ENCODE measurements at regions of chr1 and their contacts with region 1.

Region 1: DNA sequence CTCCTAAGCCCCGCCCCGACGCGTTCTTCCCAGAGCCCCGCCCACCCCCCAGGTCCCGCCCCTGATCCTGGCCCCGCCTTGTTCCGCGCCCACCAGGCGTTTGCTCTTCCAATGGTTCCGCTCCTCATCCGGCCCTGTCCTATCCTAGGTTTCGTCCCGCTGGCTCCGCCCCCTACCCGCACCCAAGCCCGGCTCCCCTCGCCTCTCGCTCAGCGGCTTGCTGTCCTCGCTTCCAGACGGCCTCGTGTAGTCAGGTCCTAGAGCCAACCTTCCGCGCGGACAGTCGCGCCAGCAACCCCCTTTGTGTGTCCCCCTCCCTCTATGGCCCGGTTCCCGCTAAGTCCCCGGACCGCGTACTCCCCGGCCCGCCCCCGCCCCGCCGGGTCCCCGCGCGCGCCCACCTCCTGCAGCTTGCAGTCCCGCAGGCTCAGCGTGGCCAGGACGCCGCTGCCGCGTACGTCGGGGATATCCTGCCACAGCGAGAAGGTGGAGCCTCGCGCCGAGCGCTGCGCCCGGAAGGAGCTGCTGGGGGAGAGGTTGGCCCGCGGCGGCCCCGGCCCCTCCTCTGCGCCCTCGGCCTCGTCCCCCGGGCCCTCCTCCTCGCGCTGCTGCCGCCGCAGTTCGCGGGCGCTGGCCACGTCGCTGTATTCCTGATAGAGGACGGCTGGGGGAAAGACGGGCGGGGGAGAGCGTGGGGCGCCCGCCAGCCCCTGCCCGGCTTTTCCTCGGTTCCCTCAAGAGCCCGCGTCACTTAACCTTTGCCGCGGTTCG is 5.7 kb downstream of the ARHGEF19 start:
- DNase-seq: peak; percentile 96 to 97
- H3K4me3 ChIP-seq: peak overlapping the region; percentile 50 to 67 (median 58)
- H3K27ac ChIP-seq: peak overlapping the region; percentile 56; the same call in 1 of the 2 replicates
- H3K4me1 ChIP-seq: peaks cover 4 to 33% (median 20%) of the 10 kb centered on the region in 4 experiments
- H3K27me3 ChIP-seq: no peaks in the 10 kb centered on the region
- CTCF ChIP-seq: no peak
- EP300 ChIP-seq: no peak
- POLR2A ChIP-seq: peak; percentile 68 to 79; a peak in 2 of 3 replicates
- RAD21 ChIP-seq: no peak

Region 2: GRCh38 chr1:16092097-16092922 is 114.4 kb before region 1 on chr1:
- CTCF ChIA-PET with region 1: no interaction called
- POLR2A ChIA-PET with region 1: no interaction called
- DNase-seq: no peak
- H3K4me3 ChIP-seq: no peak overlapping the region
- H3K27ac ChIP-seq: no peak overlapping the region
- H3K4me1 ChIP-seq: peaks cover 0 to 12% (median 3%) of the 10 kb centered on the region in 4 experiments; a peak in 4 of 7 replicates
- H3K27me3 ChIP-seq: peaks cover 0 to 2% (median 0%) of the 10 kb centered on the region in 4 experiments; a peak in 1 of 7 replicates
- CTCF ChIP-seq: no peak
- EP300 ChIP-seq: no peak
- POLR2A ChIP-seq: no peak
- RAD21 ChIP-seq: no peak

Region 3: DNA sequence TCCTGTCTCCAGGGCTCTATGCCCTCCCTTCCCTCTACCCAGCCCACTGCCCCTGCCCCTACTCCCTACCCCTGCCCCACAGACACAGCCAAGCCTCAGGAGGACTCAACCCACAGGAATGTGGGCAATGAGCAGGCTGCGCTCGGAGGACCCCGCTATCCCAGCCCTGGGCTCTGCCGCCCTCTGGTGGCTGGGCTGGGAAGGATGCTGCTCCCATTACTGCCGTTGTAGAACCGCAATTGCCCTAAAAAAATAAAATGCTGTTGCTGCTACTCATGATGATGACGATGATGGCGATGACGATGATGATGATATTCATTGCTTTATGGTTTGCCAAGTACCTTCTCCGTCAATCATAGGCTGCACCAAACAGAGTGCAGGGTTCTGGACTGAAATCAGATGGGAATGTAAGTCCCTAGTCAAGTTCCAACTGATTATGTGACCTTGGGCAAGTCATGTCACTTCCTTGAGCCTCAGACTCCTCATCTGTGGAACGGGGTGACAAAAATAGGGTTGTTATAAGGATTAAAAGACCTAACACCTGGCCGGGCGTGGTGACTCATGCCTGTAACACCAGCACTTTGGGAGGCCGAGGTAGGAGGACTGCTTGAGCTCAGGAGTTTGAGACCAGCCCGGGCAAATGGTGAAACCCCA is 18.9 kb before region 1 on chr1:
- CTCF ChIA-PET with region 1: interaction called, 45 read pairs
- POLR2A ChIA-PET with region 1: interaction called, 7 read pairs
- DNase-seq: peak in 1 of 2 experiments; percentile 95
- H3K4me3 ChIP-seq: no peak overlapping the region
- H3K27ac ChIP-seq: no peak overlapping the region
- H3K4me1 ChIP-seq: no peaks in the 10 kb centered on the region
- H3K27me3 ChIP-seq: no peaks in the 10 kb centered on the region; a peak in 1 of 7 replicates
- CTCF ChIP-seq: peak; percentile 92 to 98 (median 95)
- EP300 ChIP-seq: no peak
- POLR2A ChIP-seq: no peak
- RAD21 ChIP-seq: peak; percentile 100

Region 4: GRCh38 chr1:16217061-16217785 is 10.5 kb after region 1 on chr1:
- CTCF ChIA-PET with region 1: interaction called, 13 read pairs
- POLR2A ChIA-PET with region 1: interaction called, 26 read pairs
- DNase-seq: peak; percentile 93 to 98
- H3K4me3 ChIP-seq: peak overlapping the region; percentile 24 to 62 (median 54); a peak in 7 of 8 replicates
- H3K27ac ChIP-seq: no peak overlapping the region
- H3K4me1 ChIP-seq: peaks cover 6 to 23% (median 19%) of the 10 kb centered on the region in 4 experiments
- H3K27me3 ChIP-seq: peaks cover 0 to 14% (median 6%) of the 10 kb centered on the region in 4 experiments; a peak in 5 of 7 replicates
- CTCF ChIP-seq: no peak
- EP300 ChIP-seq: no peak
- POLR2A ChIP-seq: no peak
- RAD21 ChIP-seq: no peak

Region 5: GRCh38 chr1:16226490-16227179 is 19.9 kb after region 1 on chr1:
- CTCF ChIA-PET with region 1: interaction called, 16 read pairs
- POLR2A ChIA-PET with region 1: interaction called, 32 read pairs
- DNase-seq: peak in 1 of 2 experiments; percentile 94
- H3K4me3 ChIP-seq: peak overlapping the region; percentile 24 to 62 (median 54); a peak in 7 of 8 replicates
- H3K27ac ChIP-seq: no peak overlapping the region
- H3K4me1 ChIP-seq: peaks cover 0 to 16% (median 9%) of the 10 kb centered on the region in 4 experiments; a peak in 5 of 7 replicates
- H3K27me3 ChIP-seq: peaks cover 18 to 56% (median 46%) of the 10 kb centered on the region in 4 experiments
- CTCF ChIP-seq: no peak
- EP300 ChIP-seq: no peak
- POLR2A ChIP-seq: no peak
- RAD21 ChIP-seq: no peak